Endothelial cell of umbilical vein (primary cell): ENCODE measurements at regions of chr7 and their contacts with region 1.

Region 1: DNA sequence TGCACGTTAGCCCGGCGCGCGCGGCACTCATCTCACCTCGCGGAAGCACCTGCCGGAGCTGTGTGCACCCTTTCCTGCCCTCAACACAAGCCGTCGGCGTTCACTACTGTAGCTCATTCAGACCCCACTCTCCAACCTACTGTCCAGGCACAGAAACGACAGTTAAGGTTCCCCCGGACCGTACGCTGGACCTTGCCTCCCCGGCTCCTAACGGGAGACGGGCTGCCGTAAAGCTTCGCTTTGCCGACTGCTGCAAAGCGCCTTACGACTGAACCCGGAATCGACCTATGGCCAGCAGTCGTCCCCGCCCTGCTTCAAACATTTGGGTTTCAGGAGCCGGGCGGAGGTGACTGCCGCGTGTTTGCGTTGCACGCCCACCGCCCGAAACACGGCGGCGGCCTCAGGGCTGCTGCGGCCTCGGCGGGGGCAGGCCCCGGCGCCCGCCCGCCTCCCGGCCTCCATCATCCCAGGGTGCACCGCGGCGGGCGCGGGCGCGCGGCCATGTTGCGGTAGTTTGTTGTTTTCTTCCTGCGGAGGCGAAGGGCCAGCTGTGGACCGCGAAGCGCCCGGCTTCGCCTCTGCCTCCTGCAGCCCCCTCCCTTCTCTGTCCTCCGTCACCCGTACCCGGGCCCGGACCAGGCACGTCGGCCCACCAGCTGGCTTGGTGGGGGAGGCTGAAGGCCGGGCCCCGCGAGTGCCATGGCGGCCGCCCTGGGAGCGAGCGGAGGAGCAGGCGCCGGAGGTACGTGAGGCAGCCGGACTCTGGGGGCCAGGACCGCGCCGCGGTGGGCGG is at the start of gene RBM33:
- DNase-seq: peak; percentile 87
- H3K4me3 ChIP-seq: peak within 1 kb of the TSS; percentile 83 to 100 (median 98)
- H3K27ac ChIP-seq: peak within 1 kb of the TSS; percentile 92
- H3K4me1 ChIP-seq: peaks cover 21% of the 10 kb centered on the region
- H3K27me3 ChIP-seq: no peaks in the 10 kb centered on the region
- CTCF ChIP-seq: no peak
- POLR2A ChIP-seq: peak; percentile 91
- total RNA-seq, gene RBM33: 62.9 and 68.2 TPM in 2 replicates

Region 2: DNA sequence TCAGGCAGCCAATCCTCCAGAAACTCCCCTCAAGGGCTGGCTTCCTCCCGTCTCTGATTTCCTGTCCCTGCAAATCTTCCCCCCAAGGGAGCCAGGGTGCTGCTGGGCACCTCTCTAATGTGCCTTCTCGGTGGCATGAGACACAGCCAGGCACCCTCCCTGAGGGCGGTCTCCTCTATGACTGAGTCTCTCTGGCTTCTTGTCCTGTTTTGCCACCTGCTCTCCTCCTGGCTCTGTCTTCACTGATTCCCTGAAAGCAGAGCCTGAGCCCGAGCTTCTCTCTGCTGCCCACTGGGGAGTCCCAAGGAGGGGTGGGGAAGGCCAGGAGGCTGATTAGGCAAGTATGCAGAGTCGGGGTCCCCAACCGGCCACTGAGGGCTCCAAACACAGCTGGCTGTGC is 407.1 kb before region 1 on chr7:
- CTCF ChIA-PET with region 1: no interaction called
- POLR2A ChIA-PET with region 1: no interaction called
- dilution Hi-C with region 1: no loop called
- intact Hi-C with region 1: no loop called
- DNase-seq: no peak
- H3K4me3 ChIP-seq: no peak overlapping the region
- H3K27ac ChIP-seq: no peak overlapping the region
- H3K4me1 ChIP-seq: no peaks in the 10 kb centered on the region
- H3K27me3 ChIP-seq: peaks cover 5 to 6% of the 10 kb centered on the region in 2 experiments
- CTCF ChIP-seq: no peak
- POLR2A ChIP-seq: no peak

Region 3: DNA sequence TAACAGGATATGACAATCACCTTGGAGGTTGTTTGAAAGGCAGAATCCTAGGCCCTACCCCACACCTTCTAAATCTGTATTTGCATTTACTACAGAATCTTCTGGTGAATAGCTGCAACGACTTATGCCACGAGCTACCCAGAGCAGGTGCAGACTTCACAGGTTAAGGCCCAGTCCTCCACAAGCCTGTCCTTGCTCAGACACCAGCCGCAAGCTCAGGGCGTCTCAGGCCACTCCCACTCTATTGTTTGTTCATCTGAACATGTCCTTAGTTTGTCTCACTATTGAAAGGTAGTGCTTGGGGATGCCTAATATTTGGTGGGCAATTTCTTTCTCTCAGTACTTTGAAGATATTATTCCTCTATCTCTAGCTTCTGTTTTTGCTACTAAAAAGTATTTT is 18.8 kb before region 1 on chr7:
- CTCF ChIA-PET with region 1: no interaction called
- POLR2A ChIA-PET with region 1: interaction called, 10 read pairs
- dilution Hi-C with region 1: no loop called
- intact Hi-C with region 1: no loop called
- DNase-seq: no peak
- H3K4me3 ChIP-seq: no peak overlapping the region
- H3K27ac ChIP-seq: no peak overlapping the region
- H3K4me1 ChIP-seq: no peaks in the 10 kb centered on the region
- H3K27me3 ChIP-seq: peaks cover 0 to 3% of the 10 kb centered on the region in 2 experiments
- CTCF ChIP-seq: no peak
- POLR2A ChIP-seq: no peak

Region 4: GRCh38 chr7:155665957-155666287 is 21.5 kb after region 1 on chr7:
- CTCF ChIA-PET with region 1: interaction called, 4 read pairs
- POLR2A ChIA-PET with region 1: interaction called, 3 read pairs
- dilution Hi-C with region 1: no loop called
- intact Hi-C with region 1: loop called (anchors 2 kb)
- DNase-seq: peak; percentile 66
- H3K4me3 ChIP-seq: no peak overlapping the region
- H3K27ac ChIP-seq: peak overlapping the region; percentile 35
- H3K4me1 ChIP-seq: peaks cover 22% of the 10 kb centered on the region
- H3K27me3 ChIP-seq: no peaks in the 10 kb centered on the region
- CTCF ChIP-seq: no peak
- POLR2A ChIP-seq: no peak

Region 5: GRCh38 chr7:155685070-155685790 is 40.9 kb after region 1 on chr7:
- CTCF ChIA-PET with region 1: no interaction called
- POLR2A ChIA-PET with region 1: no interaction called
- dilution Hi-C with region 1: no loop called
- intact Hi-C with region 1: no loop called
- DNase-seq: no peak
- H3K4me3 ChIP-seq: no peak overlapping the region
- H3K27ac ChIP-seq: no peak overlapping the region
- H3K4me1 ChIP-seq: no peaks in the 10 kb centered on the region
- H3K27me3 ChIP-seq: no peaks in the 10 kb centered on the region
- CTCF ChIP-seq: no peak
- POLR2A ChIP-seq: no peak

Region 6: DNA sequence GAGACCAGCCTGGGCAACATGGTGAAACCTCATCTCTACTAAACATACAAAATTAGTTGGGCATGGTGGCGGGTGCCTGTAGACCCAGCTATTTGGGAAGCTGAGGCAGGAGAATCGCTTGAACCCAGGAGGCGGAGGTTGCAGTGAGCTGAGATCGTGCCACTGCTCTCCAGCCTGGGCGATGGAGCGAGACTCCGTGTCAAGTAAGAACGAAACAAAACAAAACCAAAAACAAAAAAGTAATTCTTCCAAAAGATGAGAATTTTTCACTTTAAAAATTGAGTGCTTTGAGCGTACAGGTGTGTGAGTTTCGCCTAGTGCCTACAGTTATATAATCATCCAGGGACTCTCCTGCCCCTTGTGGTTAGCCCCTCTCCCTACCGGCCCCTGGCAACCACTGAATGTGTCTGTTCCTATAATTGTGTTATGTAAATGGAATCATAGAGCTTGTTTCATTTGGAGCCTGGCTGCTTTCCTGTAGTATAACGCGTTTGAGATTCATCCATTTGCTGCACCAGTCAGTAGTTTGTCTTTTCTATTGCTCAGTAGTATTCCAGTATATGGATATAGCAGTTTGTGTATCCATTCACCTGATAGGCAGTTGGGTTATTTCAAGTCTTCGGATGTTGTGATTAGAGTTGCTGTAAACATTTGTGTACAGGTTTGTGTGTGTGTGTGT is 80.1 kb after region 1 on chr7:
- CTCF ChIA-PET with region 1: no interaction called
- POLR2A ChIA-PET with region 1: interaction called, 7 read pairs
- dilution Hi-C with region 1: no loop called
- intact Hi-C with region 1: loop called (anchors 5 kb)
- DNase-seq: no peak
- H3K4me3 ChIP-seq: no peak overlapping the region
- H3K27ac ChIP-seq: no peak overlapping the region
- H3K4me1 ChIP-seq: no peaks in the 10 kb centered on the region
- H3K27me3 ChIP-seq: no peaks in the 10 kb centered on the region
- CTCF ChIP-seq: peak; percentile 8 to 11
- POLR2A ChIP-seq: no peak

Region 7: GRCh38 chr7:155753446-155753965 is 109.1 kb after region 1 on chr7:
- CTCF ChIA-PET with region 1: no interaction called
- POLR2A ChIA-PET with region 1: no interaction called
- dilution Hi-C with region 1: no loop called
- intact Hi-C with region 1: no loop called
- DNase-seq: no peak
- H3K4me3 ChIP-seq: no peak overlapping the region
- H3K27ac ChIP-seq: no peak overlapping the region
- H3K4me1 ChIP-seq: peaks cover 6% of the 10 kb centered on the region
- H3K27me3 ChIP-seq: no peaks in the 10 kb centered on the region
- CTCF ChIP-seq: no peak
- POLR2A ChIP-seq: no peak

Region 8: DNA sequence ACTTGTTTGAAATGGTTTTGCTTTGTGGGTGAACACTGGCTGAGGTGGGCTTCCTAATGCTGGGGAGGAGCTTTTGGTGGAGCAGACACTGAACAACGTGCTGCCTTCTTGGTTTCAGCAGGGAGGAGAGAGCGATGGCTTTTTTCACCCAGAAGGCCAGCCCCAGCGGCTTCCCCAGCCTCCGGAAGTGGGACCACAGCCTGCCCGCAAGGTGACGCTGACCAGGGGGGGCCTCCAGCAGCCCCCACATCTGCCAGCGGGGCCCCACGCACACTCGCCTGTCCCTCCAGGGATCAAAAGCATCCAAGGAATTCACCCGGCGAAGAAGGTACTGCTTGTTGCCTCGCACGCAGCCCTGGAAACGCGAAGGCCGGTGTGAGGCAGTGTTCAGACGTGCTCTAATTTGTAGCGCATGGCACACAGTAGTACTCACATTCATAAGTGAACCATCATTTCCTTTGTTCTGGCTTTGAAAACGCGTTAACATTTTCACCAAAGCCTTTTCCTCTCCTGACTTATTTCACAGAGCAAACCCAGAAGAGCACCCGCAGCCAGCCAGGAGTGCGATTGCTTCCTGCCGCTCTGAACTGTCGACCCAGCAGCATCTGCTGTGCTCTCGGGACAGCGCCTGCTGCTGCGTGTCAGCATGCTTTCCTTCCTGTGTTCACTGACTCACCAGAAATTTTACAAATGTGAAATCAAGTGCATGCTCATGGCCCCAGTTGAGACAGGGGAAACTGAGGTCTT is 119.5 kb after region 1 on chr7:
- CTCF ChIA-PET with region 1: no interaction called
- POLR2A ChIA-PET with region 1: no interaction called
- dilution Hi-C with region 1: no loop called
- intact Hi-C with region 1: loop called (anchors 1 kb)
- DNase-seq: peak; percentile 88
- H3K4me3 ChIP-seq: no peak overlapping the region
- H3K27ac ChIP-seq: peak overlapping the region; percentile 69
- H3K4me1 ChIP-seq: peaks cover 16% of the 10 kb centered on the region
- H3K27me3 ChIP-seq: no peaks in the 10 kb centered on the region
- CTCF ChIP-seq: no peak
- POLR2A ChIP-seq: no peak

Region 9: GRCh38 chr7:156892821-156893706 is 1248.7 kb after region 1 on chr7 and contains the start of gene LMBR1:
- CTCF ChIA-PET with region 1: no interaction called
- POLR2A ChIA-PET with region 1: no interaction called
- dilution Hi-C with region 1: no loop called
- intact Hi-C with region 1: no loop called
- DNase-seq: peak; percentile 96
- H3K4me3 ChIP-seq: peak within 1 kb of the TSS; percentile 90 to 94 (median 91)
- H3K27ac ChIP-seq: peak within 1 kb of the TSS; percentile 83
- H3K4me1 ChIP-seq: peaks cover 19% of the 10 kb centered on the region
- H3K27me3 ChIP-seq: no peaks in the 10 kb centered on the region
- CTCF ChIP-seq: peak; percentile 35 to 66
- POLR2A ChIP-seq: peak; percentile 79
- total RNA-seq, gene LMBR1: 57.7 and 72.9 TPM in 2 replicates